Gastrocnemius medialis (tissue), 4 donors: ENCODE measurements at regions of chr1 and their contacts with region 1.

Region 1: DNA sequence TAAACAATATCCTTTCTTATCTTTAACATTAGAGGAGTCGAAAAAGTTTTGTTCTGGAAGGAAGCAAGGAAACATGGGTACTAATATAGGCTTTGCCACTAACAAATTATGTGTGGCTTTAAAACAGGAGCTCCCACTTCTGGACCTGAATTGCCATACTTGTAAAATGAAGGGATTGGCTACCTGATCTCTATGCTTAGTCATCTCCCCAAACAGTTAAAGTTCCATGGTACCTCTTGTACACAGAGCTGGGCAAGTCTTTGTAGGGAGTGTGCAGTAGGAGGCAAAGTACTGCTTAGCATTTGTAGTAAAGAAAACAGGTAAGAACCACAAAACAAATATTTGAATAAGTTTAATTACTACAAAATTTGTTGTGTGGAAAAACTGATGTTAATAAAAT is 81.3 kb downstream of the MAST2 start:
- DNase-seq: no peak
- ATAC-seq: peak; percentile 50 to 81
- H3K4me3 ChIP-seq: no peak overlapping the region
- H3K27ac ChIP-seq: peak overlapping the region; percentile 37 to 74 (median 56)
- H3K4me1 ChIP-seq: peaks cover 14 to 37% of the 10 kb centered on the region in 2 donors
- H3K27me3 ChIP-seq: no peaks in the 10 kb centered on the region
- CTCF ChIP-seq: no peak
- POLR2A ChIP-seq: no peak

Region 2: DNA sequence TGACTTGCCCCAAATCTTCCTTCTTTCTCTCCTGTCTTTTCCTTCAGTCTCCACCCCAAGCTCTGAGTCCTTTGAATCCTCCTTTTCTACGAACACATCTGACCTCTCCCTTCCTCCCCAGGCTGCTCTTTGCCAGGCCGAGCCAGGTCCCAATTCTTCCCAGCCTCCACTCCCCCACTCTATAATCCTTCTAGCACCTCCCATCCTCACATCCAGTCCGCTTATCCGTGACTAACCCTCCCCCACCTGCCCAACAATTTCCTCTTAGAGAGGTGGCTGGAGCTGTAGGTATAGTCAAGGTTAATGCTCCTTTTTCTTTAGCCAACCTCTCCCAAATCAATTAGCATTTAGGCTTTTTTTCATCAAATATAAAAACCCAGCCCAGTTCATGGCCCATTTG is 567.5 kb before region 1 on chr1:
- in situ Hi-C with region 1: no loop called
- intact Hi-C with region 1: no loop called
- DNase-seq: no peak
- ATAC-seq: no peak
- H3K4me3 ChIP-seq: no peak overlapping the region
- H3K27ac ChIP-seq: no peak overlapping the region
- H3K4me1 ChIP-seq: no peaks in the 10 kb centered on the region
- H3K27me3 ChIP-seq: no peaks in the 10 kb centered on the region
- CTCF ChIP-seq: no peak
- POLR2A ChIP-seq: no peak

Region 3: DNA sequence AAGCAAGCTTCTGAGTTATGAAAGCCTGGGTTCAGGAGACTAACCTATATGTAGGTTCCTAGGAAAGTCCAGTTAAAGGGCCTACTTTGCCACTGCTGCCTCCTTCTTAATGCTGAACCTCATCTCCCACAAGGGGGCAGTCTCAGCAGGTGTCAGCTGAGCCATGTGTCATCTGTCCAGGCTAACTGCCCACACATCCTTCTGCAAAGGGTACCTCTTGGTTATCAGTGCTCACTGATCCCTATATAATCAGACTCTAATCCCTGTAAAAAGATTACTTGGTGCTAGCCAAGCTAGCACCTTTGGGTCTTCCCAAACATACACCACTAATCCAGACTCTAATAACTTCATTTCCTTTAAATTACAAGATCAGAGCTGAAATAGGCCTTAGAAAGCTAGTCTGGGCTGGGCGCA is 372.1 kb before region 1 on chr1:
- in situ Hi-C with region 1: no loop called
- intact Hi-C with region 1: loop called (anchors 10 kb)
- DNase-seq: peak in 1 of 2 donors; percentile 65
- ATAC-seq: peak; percentile 77 to 89
- H3K4me3 ChIP-seq: no peak overlapping the region
- H3K27ac ChIP-seq: peak overlapping the region in 1 of 4 donors; percentile 24
- H3K4me1 ChIP-seq: peaks cover 0 to 3% of the 10 kb centered on the region in 2 donors
- H3K27me3 ChIP-seq: no peaks in the 10 kb centered on the region
- CTCF ChIP-seq: peak; percentile 53 to 70 (median 63)
- POLR2A ChIP-seq: no peak

Region 4: GRCh38 chr1:45750298-45751038 is 134.2 kb before region 1 on chr1 and contains the start of gene IPP:
- in situ Hi-C with region 1: no loop called
- intact Hi-C with region 1: loop called (anchors 2 kb)
- DNase-seq: peak; percentile 95 to 97
- ATAC-seq: peak; percentile 91 to 93
- H3K4me3 ChIP-seq: peak within 1 kb of the TSS; percentile 65 to 92 (median 72)
- H3K27ac ChIP-seq: peak within 1 kb of the TSS; percentile 93 to 100 (median 94)
- H3K4me1 ChIP-seq: peaks cover 11% of the 10 kb centered on the region in 2 donors
- H3K27me3 ChIP-seq: no peaks in the 10 kb centered on the region
- CTCF ChIP-seq: peak in 2 of 5 experiments; percentile 17 to 29
- POLR2A ChIP-seq: peak; percentile 93 to 95
- total RNA-seq, gene IPP: 5.6 to 11.7 (median 7.1) TPM

Region 5: DNA sequence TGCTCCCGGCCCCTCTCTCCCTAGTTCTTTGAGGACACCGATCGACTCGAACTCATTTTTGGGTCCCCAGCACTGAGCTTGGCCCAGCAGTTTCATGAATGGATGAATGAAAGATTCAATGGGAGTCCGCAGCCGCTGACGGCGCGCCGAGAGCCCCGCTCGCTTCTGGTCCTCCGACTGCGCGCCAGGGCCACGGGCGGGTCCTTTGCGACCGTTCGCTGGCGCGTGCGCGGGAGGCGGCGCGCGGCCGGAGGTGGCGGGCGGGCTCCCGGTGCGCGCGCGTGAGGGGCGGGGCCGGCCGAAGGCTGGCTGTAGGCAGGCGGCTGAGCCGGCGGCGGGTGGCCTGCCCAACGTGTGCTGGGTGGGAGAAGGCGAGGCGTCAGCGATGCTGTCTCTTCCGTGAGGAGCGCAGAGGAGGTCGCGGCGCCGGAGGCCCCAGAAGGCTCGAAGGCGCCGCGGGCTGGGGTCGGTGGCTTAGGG is 81.4 kb before region 1 on chr1 and contains the start of gene MAST2:
- in situ Hi-C with region 1: no loop called
- intact Hi-C with region 1: loop called (anchors 5 kb)
- DNase-seq: peak; percentile 77 to 87
- ATAC-seq: peak; percentile 65 to 80
- H3K4me3 ChIP-seq: peak within 1 kb of the TSS; percentile 64 to 79 (median 72)
- H3K27ac ChIP-seq: peak within 1 kb of the TSS; percentile 88 to 96 (median 92)
- H3K4me1 ChIP-seq: peaks cover 22 to 40% of the 10 kb centered on the region in 2 donors
- H3K27me3 ChIP-seq: no peaks in the 10 kb centered on the region
- CTCF ChIP-seq: peak in 2 of 5 experiments; percentile 21 to 30
- POLR2A ChIP-seq: peak; percentile 97 to 98
- total RNA-seq, gene MAST2: 110 to 195 (median 162) TPM